ENCODE measurements at regions of chr2 and their contacts with region 1.

Region 1: DNA sequence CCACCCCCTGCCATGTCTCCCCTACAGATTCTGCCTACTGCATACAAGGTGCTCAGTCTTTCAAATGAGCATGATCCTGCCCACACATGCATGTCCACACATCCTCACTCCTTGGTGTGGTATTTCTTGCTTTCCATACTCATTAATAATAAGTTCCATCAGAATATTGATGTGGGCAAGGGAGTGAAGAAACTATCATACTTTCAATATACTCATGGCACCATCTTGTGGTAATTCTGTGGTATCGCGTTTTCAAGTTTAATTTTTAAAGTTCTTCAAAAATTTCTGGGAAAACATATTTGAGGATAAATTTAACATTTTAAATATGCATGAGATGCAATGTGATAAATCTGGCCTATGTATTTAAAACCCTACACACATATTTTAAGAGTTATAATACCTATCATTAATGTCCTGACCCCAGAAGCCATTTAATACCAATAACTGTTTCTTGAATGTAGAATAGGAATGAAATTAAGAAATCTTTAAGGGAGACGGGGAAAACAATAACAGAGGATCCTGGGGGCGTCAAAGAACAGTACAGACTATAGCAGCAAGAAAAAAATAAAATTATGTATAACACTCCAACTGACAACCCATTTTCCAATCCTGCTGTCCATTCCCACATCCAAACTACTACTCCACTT is 110.1 kb downstream of the ZNF385B start:
- DNase-seq: peak; percentile 50
- ATAC-seq: peak; percentile 33; the same call in 1 of the 2 replicates
- H3K4me3 ChIP-seq: no peak overlapping the region
- H3K27ac ChIP-seq: no peak overlapping the region
- H3K4me1 ChIP-seq: no peaks in the 10 kb centered on the region
- H3K27me3 ChIP-seq: no peaks in the 10 kb centered on the region
- CTCF ChIP-seq: peak; percentile 83

Region 2: DNA sequence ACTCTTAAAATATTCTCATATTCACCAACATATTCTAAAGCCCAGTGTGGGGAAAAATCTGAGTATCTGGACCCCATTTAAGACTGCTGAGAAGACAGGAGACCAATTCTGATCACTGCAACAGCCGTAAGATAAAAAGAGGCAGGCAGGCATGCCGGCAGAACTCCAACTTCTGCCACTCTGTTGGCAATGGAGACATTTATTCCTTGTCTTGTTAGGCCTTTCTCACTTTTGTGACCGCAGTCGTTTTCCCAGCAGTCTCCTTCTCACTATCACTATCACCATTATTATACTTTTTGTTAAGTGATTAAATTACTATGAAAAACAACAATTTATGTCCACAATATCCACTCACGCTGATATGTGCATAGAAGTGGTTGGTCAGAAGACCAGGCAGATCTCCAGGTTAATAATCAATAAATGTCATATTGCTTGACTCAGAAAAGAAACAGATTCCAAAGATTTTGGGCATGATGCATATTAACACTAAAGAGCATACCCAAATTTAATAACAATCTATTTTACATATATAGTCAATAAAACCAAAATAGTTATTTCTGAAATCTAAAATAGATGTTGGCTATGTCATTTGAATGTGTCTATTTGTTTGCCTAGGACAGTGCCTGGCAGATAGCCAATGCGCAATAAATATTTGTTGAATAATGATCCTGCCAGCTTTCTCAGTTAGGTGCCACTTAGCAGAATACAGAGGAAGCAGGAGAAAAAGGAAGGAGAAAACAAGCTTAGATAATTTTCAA is 524.9 kb before region 1 on chr2:
- CTCF ChIA-PET with region 1: no interaction called
- POLR2A ChIA-PET with region 1: no interaction called
- intact Hi-C with region 1: loop called (anchors 10 kb)
- DNase-seq: peak; percentile 44
- ATAC-seq: no peak
- H3K4me3 ChIP-seq: no peak overlapping the region
- H3K27ac ChIP-seq: no peak overlapping the region
- H3K4me1 ChIP-seq: peaks cover 13% of the 10 kb centered on the region
- H3K27me3 ChIP-seq: no peaks in the 10 kb centered on the region
- CTCF ChIP-seq: no peak

Region 3: DNA sequence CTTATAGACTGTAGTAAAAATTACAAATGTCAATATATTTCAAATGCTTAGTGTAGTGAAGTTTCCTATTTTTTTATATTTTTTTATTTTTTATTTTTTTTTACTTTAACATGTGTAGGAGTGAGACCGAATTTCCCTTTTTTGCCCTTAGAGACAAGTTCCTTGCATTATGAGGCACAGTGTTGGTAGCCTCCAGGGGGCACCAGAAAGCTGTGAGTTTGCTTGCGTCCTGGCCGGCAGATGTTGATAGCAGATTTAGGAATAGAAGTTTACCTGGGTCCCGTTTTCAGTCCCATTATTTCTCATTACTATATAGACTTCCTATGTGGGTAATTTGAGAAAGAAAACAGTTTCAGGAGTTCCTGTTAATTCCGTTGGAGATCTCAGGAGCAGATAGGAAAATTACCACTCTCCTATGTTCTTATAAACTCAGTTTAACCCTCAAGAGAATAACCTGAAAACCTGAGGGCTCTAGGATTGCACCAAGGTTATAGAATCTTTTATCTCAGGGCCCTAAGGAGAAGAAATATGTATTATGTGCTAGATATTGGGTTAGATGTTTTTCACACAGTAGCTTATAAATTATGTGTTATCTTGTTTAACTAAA is 329.1 kb before region 1 on chr2:
- CTCF ChIA-PET with region 1: no interaction called
- POLR2A ChIA-PET with region 1: no interaction called
- intact Hi-C with region 1: loop called (anchors 1 kb)
- DNase-seq: peak; percentile 84
- ATAC-seq: peak; percentile 88
- H3K4me3 ChIP-seq: no peak overlapping the region
- H3K27ac ChIP-seq: no peak overlapping the region
- H3K4me1 ChIP-seq: no peaks in the 10 kb centered on the region
- H3K27me3 ChIP-seq: no peaks in the 10 kb centered on the region
- CTCF ChIP-seq: peak; percentile 78

Region 4: DNA sequence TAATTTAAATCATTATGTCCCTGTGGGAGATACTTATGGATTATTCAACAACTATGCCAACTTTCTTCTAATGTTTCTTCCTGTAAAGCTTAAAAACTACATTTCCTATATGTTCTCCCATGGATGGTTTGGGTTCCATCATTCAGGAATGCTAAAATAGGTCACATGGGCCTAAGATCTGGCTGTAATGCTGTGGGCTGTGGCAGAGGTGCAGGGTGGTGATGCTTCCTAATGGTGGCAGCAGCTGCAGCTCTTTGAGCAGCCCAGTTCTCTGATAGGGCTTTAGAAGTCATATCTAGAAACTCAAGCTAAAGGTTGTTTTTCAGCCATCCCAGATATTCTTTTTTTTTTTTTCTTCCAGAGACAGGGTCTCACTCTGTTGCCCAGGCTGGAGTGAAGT is 156.0 kb before region 1 on chr2:
- CTCF ChIA-PET with region 1: no interaction called
- POLR2A ChIA-PET with region 1: no interaction called
- intact Hi-C with region 1: loop called (anchors 1 kb)
- DNase-seq: peak; percentile 29
- ATAC-seq: peak; percentile 37; the same call in 1 of the 2 replicates
- H3K4me3 ChIP-seq: no peak overlapping the region
- H3K27ac ChIP-seq: no peak overlapping the region
- H3K4me1 ChIP-seq: peaks cover 20% of the 10 kb centered on the region
- H3K27me3 ChIP-seq: no peaks in the 10 kb centered on the region
- CTCF ChIP-seq: peak; percentile 39; the same call in 1 of the 2 replicates

Region 5: DNA sequence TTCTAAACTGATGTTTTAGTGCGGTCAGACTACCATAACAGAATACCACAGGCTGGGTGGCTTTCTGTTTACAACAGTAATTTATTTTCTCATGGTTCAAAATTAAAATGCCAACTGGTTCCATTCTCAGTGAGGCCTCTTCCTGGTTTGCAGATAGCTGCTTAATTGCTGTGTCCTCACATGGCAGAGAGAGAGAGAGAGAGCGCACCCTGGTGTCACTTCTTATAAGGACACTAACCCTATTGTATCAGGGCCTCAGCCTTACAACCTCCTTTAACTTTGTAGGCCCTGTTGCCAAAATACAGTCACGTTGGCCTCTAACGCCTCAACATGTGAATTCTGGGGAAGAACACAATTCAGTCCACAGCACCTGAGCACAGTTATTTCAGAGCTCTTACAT is 147.6 kb after region 1 on chr2:
- CTCF ChIA-PET with region 1: no interaction called
- POLR2A ChIA-PET with region 1: no interaction called
- intact Hi-C with region 1: loop called (anchors 5 kb)
- DNase-seq: peak; percentile 79
- ATAC-seq: peak; percentile 93
- H3K4me3 ChIP-seq: no peak overlapping the region
- H3K27ac ChIP-seq: no peak overlapping the region
- H3K4me1 ChIP-seq: no peaks in the 10 kb centered on the region
- H3K27me3 ChIP-seq: no peaks in the 10 kb centered on the region
- CTCF ChIP-seq: peak; percentile 78